ENCODE measurements at regions of chr19 and their contacts with region 1.

Region 1: GRCh38 chr19:34974646-34975045 is 10.6 kb upstream of the ZNF792 start:
- DNase-seq: no peak
- H3K4me3 ChIP-seq: no peak overlapping the region
- H3K4me3 Mint-ChIP-seq: peak overlapping the region; percentile 34
- H3K27ac Mint-ChIP-seq: peak overlapping the region; percentile 76
- H3K4me1 ChIP-seq: peaks cover 30% of the 10 kb centered on the region
- H3K4me1 Mint-ChIP-seq: peaks cover 17% of the 10 kb centered on the region
- H3K27me3 ChIP-seq: no peaks in the 10 kb centered on the region
- H3K27me3 Mint-ChIP-seq: no peaks in the 10 kb centered on the region
- CTCF ChIP-seq: no peak

Region 2: DNA sequence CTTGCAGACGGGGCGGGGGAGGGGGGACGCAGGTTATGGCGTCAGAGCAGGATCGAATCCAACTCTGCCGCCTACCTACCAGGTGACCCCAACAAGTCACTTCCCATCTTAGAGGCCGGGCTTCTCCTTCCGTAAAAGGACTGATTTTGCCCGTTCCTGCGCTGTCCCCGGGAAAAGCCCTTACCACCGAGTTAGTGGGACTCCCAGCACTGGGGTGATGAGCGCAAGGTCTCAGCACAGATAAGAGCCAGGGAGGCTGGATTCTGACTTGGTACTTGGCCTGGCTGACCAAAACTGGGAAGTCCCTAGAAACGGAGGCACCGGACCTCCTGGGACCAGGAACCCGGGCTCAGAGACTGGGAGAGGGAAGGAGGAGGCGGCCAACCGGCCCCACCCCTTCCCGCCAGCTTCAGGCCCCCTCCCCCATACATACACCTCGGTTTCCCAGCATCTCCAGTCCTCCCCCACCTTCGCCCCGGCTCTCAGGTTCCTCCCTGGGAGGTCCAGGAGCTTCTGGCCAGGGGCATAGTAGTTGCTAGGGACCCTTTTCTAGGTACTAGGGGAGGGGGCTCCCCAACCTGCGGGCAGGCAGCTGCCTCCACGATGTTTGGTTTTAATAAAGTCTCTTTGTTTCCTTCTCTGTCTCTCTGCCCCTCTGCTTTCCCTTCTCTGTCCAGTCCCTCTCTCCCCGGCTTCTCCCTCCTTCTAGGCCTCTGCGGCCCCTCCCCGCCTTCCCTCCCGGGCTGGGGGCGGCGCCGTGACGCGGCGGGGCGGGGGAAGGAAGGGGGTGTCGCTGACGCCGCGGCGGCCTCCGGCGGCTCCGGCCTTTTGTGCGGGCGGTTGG is 25.1 kb after region 1 on chr19 and contains the start of gene GRAMD1A:
- CTCF ChIA-PET with region 1: no interaction called
- POLR2A ChIA-PET with region 1: no interaction called
- intact Hi-C with region 1: loop called (anchors 1 kb)
- DNase-seq: peak; percentile 90 to 94
- H3K4me3 ChIP-seq: peak within 1 kb of the TSS; percentile 90
- H3K4me3 Mint-ChIP-seq: peak within 1 kb of the TSS; percentile 99
- H3K27ac Mint-ChIP-seq: peak within 1 kb of the TSS; percentile 98
- H3K4me1 ChIP-seq: peaks cover 53% of the 10 kb centered on the region
- H3K4me1 Mint-ChIP-seq: peaks cover 47% of the 10 kb centered on the region
- H3K27me3 ChIP-seq: no peaks in the 10 kb centered on the region
- H3K27me3 Mint-ChIP-seq: no peaks in the 10 kb centered on the region
- CTCF ChIP-seq: no peak
- total RNA-seq, gene GRAMD1A: 110 and 132 TPM in 2 replicates

Region 3: GRCh38 chr19:35013031-35013819 is 38.6 kb after region 1 on chr19:
- CTCF ChIA-PET with region 1: interaction called, 5 read pairs
- POLR2A ChIA-PET with region 1: no interaction called
- intact Hi-C with region 1: loop called (anchors 1 kb)
- DNase-seq: peak; percentile 66 to 86
- H3K4me3 ChIP-seq: no peak overlapping the region
- H3K4me3 Mint-ChIP-seq: peak overlapping the region; percentile 32
- H3K27ac Mint-ChIP-seq: peak overlapping the region; percentile 19
- H3K4me1 ChIP-seq: no peaks in the 10 kb centered on the region
- H3K4me1 Mint-ChIP-seq: peaks cover 8% of the 10 kb centered on the region
- H3K27me3 ChIP-seq: no peaks in the 10 kb centered on the region
- H3K27me3 Mint-ChIP-seq: no peaks in the 10 kb centered on the region
- CTCF ChIP-seq: peak; percentile 96 to 97

Region 4: DNA sequence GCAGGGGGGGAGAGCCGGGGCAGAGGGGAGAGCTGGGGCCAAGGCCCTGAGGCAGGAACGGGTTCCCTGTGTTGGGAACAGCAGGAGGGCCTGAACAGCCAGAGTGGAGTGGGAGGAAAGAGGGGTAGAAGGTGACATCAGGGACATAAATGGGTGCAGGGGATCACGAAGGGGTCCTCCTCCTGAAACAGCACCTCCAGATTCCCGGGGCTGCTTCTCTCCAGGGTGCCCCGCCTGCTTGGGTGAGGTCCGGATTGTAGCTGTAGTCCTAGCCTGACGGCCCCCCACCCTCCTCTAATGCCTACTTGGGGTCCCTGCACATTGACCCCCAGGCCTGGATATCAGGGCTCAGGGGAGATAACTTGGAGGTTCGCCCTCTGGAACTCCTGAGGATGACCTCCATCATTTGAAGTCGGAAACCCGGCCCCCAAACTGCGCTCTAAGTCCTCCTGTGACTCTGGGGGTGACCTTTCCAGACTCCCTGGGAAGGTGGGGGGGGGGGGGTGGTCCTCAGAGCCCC is 55.2 kb after region 1 on chr19:
- CTCF ChIA-PET with region 1: no interaction called
- POLR2A ChIA-PET with region 1: no interaction called
- intact Hi-C with region 1: no loop called
- DNase-seq: no peak
- H3K4me3 ChIP-seq: peak overlapping the region; percentile 45
- H3K4me3 Mint-ChIP-seq: peak overlapping the region; percentile 79
- H3K27ac Mint-ChIP-seq: no peak overlapping the region
- H3K4me1 ChIP-seq: peaks cover 10% of the 10 kb centered on the region; the same call in 1 of the 2 replicates
- H3K4me1 Mint-ChIP-seq: peaks cover 8% of the 10 kb centered on the region
- H3K27me3 ChIP-seq: no peaks in the 10 kb centered on the region
- H3K27me3 Mint-ChIP-seq: peaks cover 6% of the 10 kb centered on the region
- CTCF ChIP-seq: no peak

Region 5: GRCh38 chr19:35066691-35067563 is 92.3 kb after region 1 on chr19:
- CTCF ChIA-PET with region 1: no interaction called
- POLR2A ChIA-PET with region 1: no interaction called
- intact Hi-C with region 1: loop called (anchors 1 kb)
- DNase-seq: peak; percentile 85 to 92
- H3K4me3 ChIP-seq: no peak overlapping the region
- H3K4me3 Mint-ChIP-seq: peak overlapping the region; percentile 43
- H3K27ac Mint-ChIP-seq: no peak overlapping the region
- H3K4me1 ChIP-seq: no peaks in the 10 kb centered on the region
- H3K4me1 Mint-ChIP-seq: no peaks in the 10 kb centered on the region
- H3K27me3 ChIP-seq: no peaks in the 10 kb centered on the region; the same call in 1 of the 2 replicates
- H3K27me3 Mint-ChIP-seq: peaks cover 3% of the 10 kb centered on the region
- CTCF ChIP-seq: peak; percentile 95 to 96